CD8-positive, alpha-beta memory T cell (primary cell): ENCODE measurements at regions of chr6 and their contacts with region 1.

Region 1: DNA sequence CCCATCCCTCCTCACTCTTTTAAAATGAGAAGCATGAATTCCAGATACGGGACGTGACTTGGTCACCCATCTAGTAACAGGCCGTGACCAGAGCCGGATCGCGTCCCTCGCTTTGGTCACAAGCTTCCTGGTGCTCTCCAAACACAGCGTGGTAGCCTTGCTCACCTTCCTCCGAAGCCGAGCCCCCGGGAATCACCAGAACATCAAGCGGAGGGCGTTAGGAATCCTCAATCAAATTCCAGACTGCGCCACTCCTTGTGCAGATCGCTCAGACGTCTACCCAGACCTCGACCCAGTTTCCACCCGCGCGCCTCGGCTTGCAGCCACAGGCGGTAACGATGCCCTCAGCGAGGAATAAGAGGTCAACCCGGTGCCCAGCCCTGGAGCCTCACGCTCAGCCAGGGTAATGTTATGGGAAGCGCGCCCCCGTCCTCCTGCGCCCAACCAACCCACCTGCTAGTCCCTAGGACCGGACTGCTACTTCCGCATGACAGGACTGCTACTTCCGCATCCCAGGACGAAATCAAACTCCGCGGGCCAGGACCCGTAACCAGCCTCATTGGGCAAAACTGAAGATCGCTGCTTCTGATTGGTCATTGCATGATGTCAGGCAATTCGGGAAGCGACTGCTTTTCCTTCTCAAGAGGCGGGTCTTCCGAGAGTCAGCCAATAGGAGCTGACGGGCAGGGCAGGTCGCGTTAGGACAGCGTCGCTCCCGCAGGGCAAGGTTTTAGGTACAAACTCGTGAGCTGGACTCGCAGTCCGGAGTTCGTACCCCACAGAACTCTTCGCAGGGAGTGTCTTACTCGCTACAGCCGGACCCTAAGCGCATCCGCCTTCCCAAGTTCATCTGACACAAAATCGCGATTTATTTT is at the start of gene MTFR2:
- DNase-seq: peak; percentile 88 to 97 (median 94)
- H3K4me3 ChIP-seq: peak within 1 kb of the TSS; percentile 82
- H3K4me3 Mint-ChIP-seq: peak within 1 kb of the TSS; percentile 93 to 97 (median 93)
- H3K27ac ChIP-seq: peak within 1 kb of the TSS; percentile 52
- H3K27ac Mint-ChIP-seq: peak within 1 kb of the TSS; percentile 27 to 91 (median 68)
- H3K4me1 ChIP-seq: peaks cover 19% of the 10 kb centered on the region
- H3K4me1 Mint-ChIP-seq: peaks cover 31 to 46% (median 40%) of the 10 kb centered on the region in 3 donors
- H3K27me3 ChIP-seq: no peaks in the 10 kb centered on the region
- H3K27me3 Mint-ChIP-seq: peaks cover 0 to 2% of the 10 kb centered on the region in 2 donors
- total RNA-seq, gene MTFR2: 18.8 to 21.7 TPM

Region 2: GRCh38 chr6:135627092-135627715 is 622.8 kb before region 1 on chr6:
- CTCF ChIA-PET with region 1: no interaction called
- POLR2A ChIA-PET with region 1: no interaction called
- DNase-seq: no peak
- H3K4me3 ChIP-seq: no peak overlapping the region
- H3K4me3 Mint-ChIP-seq: no peak overlapping the region
- H3K27ac ChIP-seq: no peak overlapping the region
- H3K27ac Mint-ChIP-seq: no peak overlapping the region
- H3K4me1 ChIP-seq: no peaks in the 10 kb centered on the region
- H3K4me1 Mint-ChIP-seq: peaks cover 8 to 17% (median 14%) of the 10 kb centered on the region in 3 donors
- H3K27me3 ChIP-seq: no peaks in the 10 kb centered on the region
- H3K27me3 Mint-ChIP-seq: peaks cover 1 to 4% of the 10 kb centered on the region in 2 donors

Region 3: GRCh38 chr6:135994857-135995544 is 255.0 kb before region 1 on chr6:
- CTCF ChIA-PET with region 1: no interaction called
- POLR2A ChIA-PET with region 1: no interaction called
- DNase-seq: no peak
- H3K4me3 ChIP-seq: no peak overlapping the region
- H3K4me3 Mint-ChIP-seq: no peak overlapping the region
- H3K27ac ChIP-seq: no peak overlapping the region
- H3K27ac Mint-ChIP-seq: no peak overlapping the region
- H3K4me1 ChIP-seq: no peaks in the 10 kb centered on the region
- H3K4me1 Mint-ChIP-seq: no peaks in the 10 kb centered on the region
- H3K27me3 ChIP-seq: no peaks in the 10 kb centered on the region
- H3K27me3 Mint-ChIP-seq: peaks cover 5 to 31% of the 10 kb centered on the region in 2 donors

Region 4: DNA sequence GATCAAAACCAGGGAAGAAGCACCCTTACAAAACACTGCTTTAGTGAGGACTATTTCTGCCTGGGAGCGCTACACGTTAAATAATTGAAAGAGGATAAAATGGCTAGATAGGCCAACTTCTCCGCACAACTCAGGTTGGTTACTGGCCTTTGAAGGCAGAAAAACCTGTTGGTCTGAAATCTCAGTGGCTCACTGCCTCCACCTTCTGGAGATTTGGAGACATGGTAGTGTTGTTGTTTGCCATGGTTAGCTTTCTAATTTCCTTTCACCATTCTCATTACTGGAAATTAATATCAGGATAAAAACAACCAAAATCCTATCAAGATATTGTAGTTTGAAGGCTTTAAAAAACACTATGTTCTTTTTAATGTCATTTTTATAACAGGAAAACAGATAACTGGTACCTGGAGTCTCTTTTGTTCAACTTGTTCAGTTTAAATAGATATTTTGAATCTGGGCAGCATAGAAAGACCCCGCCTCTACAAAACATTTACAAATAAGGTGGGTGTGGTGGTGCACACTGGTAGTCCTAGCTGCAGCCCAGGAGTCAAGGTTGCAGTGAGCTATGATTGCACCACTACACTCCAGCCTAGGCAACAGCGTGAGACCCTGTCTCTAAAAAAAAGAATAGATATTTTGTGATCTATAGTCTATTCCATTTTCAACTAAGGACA is 67.1 kb after region 1 on chr6:
- CTCF ChIA-PET with region 1: interaction called, 10 read pairs
- POLR2A ChIA-PET with region 1: no interaction called
- DNase-seq: peak; percentile 24 to 76 (median 59)
- H3K4me3 ChIP-seq: no peak overlapping the region
- H3K4me3 Mint-ChIP-seq: no peak overlapping the region
- H3K27ac ChIP-seq: no peak overlapping the region
- H3K27ac Mint-ChIP-seq: no peak overlapping the region
- H3K4me1 ChIP-seq: no peaks in the 10 kb centered on the region
- H3K4me1 Mint-ChIP-seq: no peaks in the 10 kb centered on the region
- H3K27me3 ChIP-seq: peaks cover 4% of the 10 kb centered on the region
- H3K27me3 Mint-ChIP-seq: peaks cover 5 to 7% of the 10 kb centered on the region in 2 donors

Region 5: DNA sequence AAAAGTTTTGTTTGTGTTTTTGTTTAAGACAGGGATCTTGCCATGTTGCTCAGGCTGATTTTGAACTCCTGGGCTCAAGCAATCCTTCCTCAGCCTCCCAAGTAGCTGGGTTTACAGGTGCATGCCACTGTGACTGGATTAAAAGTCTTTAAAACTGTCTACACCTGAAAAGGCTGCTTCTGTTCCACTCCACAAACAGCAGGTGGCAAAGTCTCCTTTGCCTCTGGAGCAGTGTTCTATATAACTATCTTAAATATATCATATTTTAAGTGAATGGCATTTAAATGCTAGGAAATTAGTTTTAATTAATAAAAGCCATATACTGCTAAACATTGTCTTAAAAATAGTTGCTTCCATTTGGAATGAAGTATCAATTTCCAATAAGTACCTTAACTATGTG is 128.8 kb after region 1 on chr6:
- CTCF ChIA-PET with region 1: no interaction called
- POLR2A ChIA-PET with region 1: no interaction called
- DNase-seq: no peak
- H3K4me3 ChIP-seq: no peak overlapping the region
- H3K4me3 Mint-ChIP-seq: no peak overlapping the region
- H3K27ac ChIP-seq: no peak overlapping the region
- H3K27ac Mint-ChIP-seq: no peak overlapping the region
- H3K4me1 ChIP-seq: no peaks in the 10 kb centered on the region
- H3K4me1 Mint-ChIP-seq: no peaks in the 10 kb centered on the region
- H3K27me3 ChIP-seq: no peaks in the 10 kb centered on the region
- H3K27me3 Mint-ChIP-seq: peaks cover 4 to 16% of the 10 kb centered on the region in 2 donors